Lower leg skin (tissue), 4 donors: ENCODE measurements at regions of chr2 and their contacts with region 1.

Region 1: DNA sequence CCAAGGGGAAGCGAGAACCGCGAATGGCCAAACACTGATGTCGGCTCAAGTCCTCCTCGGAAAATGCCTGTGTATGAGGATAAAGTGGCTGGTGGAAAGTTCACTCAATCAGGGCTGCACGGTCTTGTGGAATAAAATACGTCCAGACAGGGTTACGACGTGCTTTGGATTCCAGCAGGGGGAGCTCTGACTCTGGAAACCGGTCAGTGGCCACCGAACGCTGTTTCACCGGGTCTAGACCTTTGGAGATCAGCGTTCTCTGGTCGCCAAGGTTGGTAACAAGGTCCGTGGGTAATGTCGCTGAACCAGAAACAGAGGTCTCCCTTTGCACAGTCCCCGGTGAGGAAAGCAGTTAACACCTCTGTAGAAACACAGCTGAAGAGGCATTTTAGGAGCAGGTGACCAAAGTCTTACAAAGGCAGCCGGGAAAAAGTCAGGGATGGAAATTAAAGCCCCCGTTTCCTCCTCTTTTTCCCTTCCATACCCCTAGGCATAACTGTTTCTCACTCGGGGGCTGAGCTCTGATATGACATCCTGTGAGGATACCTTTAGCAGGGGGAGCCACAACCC is 47.8 kb downstream of the CDCA7 start:
- DNase-seq: peak; percentile 73 to 92
- H3K4me3 ChIP-seq: no peak overlapping the region
- CTCF ChIP-seq: peak in 1 of 3 donors; percentile 75
- POLR2A ChIP-seq: no peak

Region 2: GRCh38 chr2:174341286-174341994 is 939.0 kb after region 1 on chr2:
- intact Hi-C with region 1: loop called (anchors 5 kb)
- DNase-seq: peak; percentile 84 to 97
- H3K4me3 ChIP-seq: no peak overlapping the region
- CTCF ChIP-seq: peak in 1 of 3 donors; percentile 90
- POLR2A ChIP-seq: no peak